ENCODE measurements at regions of chr5 and their contacts with region 1.

Region 1: DNA sequence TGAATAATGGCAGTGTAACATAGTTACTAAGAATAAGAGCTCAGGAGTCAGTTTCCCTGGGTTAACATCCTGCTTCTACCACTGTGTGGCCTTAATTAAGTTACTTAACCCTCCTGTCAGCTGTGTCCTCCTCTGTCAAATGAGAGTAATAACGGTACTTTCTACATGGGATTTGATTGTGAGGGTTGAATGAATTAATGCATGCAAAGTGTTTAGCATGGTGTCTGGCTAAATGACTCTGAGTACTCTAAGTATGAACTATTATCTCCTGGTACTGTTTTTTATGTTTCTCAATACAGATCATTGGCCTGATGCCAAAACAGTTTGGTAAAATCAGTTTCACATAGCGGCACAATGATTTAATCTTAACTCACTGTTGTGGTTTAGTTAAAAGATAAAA is 19.6 kb downstream of the ZNF131 start:
- DNase-seq: no peak
- ATAC-seq: no peak
- H3K4me3 ChIP-seq: no peak overlapping the region
- H3K27ac ChIP-seq: no peak overlapping the region
- H3K4me1 ChIP-seq: no peaks in the 10 kb centered on the region
- H3K27me3 ChIP-seq: no peaks in the 10 kb centered on the region
- CTCF ChIP-seq: no peak

Region 2: GRCh38 chr5:43179836-43180235 is 39.5 kb after region 1 on chr5:
- CTCF ChIA-PET with region 1: no interaction called
- POLR2A ChIA-PET with region 1: interaction called, 15 read pairs
- intact Hi-C with region 1: no loop called
- DNase-seq: no peak
- ATAC-seq: no peak
- H3K4me3 ChIP-seq: no peak overlapping the region
- H3K27ac ChIP-seq: no peak overlapping the region
- H3K4me1 ChIP-seq: no peaks in the 10 kb centered on the region
- H3K27me3 ChIP-seq: no peaks in the 10 kb centered on the region
- CTCF ChIP-seq: no peak